Activated CD4-positive, alpha-beta memory T cell treated with anti-CD3 and anti-CD28 coated beads, Interleukin-2, amount 10 ng/mL, durations not matched to agents 7 days and 5 days (primary cell): ENCODE measurements at regions of chrX and their contacts with region 1.

Region 1: GRCh38 chrX:43958529-43958928 is 14.7 kb downstream of the NDP start:
- DNase-seq: peak; percentile 17
- H3K4me3 Mint-ChIP-seq: no peak overlapping the region
- H3K27ac Mint-ChIP-seq: no peak overlapping the region
- H3K4me1 Mint-ChIP-seq: peaks cover 3% of the 10 kb centered on the region
- H3K27me3 Mint-ChIP-seq: no peaks in the 10 kb centered on the region

Region 2: DNA sequence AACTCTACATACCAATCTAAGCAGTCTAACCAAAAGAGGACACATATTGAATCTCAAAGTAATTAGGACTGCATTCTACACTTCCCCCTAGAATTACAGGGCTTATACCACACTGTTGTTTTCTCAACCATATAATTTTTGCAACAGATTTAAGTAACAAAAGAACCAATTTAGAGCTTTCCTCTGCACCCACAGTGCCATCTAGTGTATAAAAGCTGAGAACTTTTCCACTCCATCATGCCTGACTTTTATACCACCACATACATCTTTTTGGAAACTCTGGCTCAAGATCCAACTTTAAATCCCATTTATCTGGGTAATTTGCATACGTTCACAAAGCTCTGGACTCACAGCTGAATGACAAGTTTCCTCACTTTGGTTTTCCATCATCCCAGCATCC is 285.5 kb after region 1 on chrX:
- CTCF ChIA-PET with region 1: interaction called, 29 read pairs
- POLR2A ChIA-PET with region 1: interaction called, 3 read pairs
- DNase-seq: no peak
- H3K4me3 Mint-ChIP-seq: no peak overlapping the region
- H3K27ac Mint-ChIP-seq: no peak overlapping the region
- H3K4me1 Mint-ChIP-seq: peaks cover 13% of the 10 kb centered on the region
- H3K27me3 Mint-ChIP-seq: no peaks in the 10 kb centered on the region